Psoas muscle (tissue), 8 donors: ENCODE measurements at regions of chr1 and their contacts with region 1.

Region 1: DNA sequence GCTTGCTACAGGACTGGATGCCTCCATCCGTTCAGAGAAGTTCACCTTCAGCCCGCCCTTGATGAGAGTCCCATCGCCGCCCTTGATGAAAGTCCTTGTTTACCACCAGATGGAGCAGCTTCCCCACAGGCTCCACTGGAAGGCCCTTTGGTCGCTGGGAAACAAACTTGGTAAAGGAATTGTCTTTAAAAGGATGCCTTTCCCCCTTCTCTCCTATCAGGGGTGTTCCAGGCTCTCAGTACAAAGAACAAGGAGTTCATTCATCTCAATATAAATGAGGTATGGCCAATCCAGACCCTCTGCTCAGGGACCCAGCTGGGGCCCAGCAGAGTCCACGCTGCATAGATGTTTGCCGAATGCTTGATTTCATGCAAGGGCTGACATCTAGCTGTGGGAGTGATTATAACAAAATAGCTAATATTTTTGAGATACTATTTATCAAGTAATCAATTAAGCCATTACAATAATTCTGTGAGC is 50.8 kb downstream of the CAPN9 start:
- DNase-seq: peak; percentile 42 to 70
- ATAC-seq: peak; percentile 77 to 94 (median 89)
- H3K4me3 ChIP-seq: no peak overlapping the region
- H3K27ac ChIP-seq: no peak overlapping the region
- H3K4me1 ChIP-seq: no peaks in the 10 kb centered on the region
- H3K27me3 ChIP-seq: no peaks in the 10 kb centered on the region
- CTCF ChIP-seq: peak; percentile 75

Region 2: GRCh38 chr1:230878591-230878990 is 80.6 kb after region 1 on chr1:
- intact Hi-C with region 1: loop called in 1 of 2 experiments (anchors 5 kb)
- DNase-seq: peak; percentile 68 to 77
- ATAC-seq: peak in 3 of 4 donors; percentile 36 to 68 (median 58)
- H3K4me3 ChIP-seq: no peak overlapping the region
- H3K27ac ChIP-seq: no peak overlapping the region
- H3K4me1 ChIP-seq: no peaks in the 10 kb centered on the region
- H3K27me3 ChIP-seq: no peaks in the 10 kb centered on the region
- CTCF ChIP-seq: no peak

Region 3: DNA sequence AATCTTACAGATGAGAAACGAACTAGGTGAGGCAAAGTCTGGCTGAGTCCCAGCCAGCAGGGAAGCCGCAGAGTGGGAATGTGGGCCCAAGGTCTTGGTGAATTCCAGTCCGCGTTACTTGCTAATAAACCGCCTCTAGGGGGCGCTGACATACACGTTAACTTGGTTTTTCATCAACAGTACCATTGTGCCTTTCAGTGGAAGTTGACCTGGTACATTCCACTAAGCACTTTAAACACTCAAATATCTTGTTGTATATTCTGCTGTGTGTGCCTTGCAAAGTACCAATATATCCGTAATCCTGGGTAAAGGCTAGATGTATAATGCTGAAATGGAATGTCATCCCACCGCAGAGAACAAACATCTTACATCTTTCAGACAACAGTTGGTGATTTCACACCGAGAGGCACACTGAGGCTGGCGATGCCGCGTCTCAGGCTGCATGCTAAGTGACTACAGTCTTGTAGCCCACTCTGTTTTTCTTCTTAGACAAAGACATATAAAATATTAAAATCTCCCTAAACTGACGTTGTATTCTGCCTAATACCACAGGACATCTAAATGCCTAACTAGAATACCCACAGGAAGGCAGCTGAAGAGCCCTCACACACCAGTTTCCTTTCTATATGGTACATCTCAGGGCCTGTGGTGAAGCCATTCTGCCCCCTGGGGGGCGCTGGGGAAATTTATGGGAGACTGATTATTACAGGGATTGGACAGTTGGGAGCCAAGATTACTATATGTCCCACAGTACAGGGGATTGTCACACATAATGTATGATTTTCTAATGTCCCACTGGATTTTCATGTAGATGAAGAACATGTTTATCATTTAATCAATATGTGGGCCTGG is 119.5 kb after region 1 on chr1:
- intact Hi-C with region 1: loop called (anchors 1 to 2 kb)
- DNase-seq: peak; percentile 59 to 67
- ATAC-seq: peak; percentile 57 to 88 (median 80)
- H3K4me3 ChIP-seq: no peak overlapping the region
- H3K27ac ChIP-seq: no peak overlapping the region
- H3K4me1 ChIP-seq: no peaks in the 10 kb centered on the region
- H3K27me3 ChIP-seq: no peaks in the 10 kb centered on the region
- CTCF ChIP-seq: peak; percentile 56